ENCODE measurements at regions of chr2 and their contacts with region 1.

Region 1: DNA sequence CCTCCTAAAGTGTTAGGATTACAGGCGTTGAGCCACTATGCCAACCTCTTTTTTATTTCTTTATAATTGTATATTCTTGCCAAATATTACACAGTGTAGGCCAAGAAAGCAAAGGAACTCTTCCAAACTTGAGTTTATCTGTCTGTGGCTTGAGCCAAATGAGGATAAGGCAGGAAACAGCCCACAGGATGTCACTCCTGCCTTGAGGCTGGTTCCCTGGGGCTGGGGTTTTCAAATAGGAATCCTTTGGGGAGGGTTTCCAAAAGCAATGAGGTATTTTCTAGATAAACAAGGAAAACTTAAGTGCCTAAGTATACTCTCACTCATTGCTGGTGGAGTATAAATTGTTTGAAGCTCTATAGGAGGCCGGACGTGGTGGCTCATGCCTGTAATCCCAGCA is 56.4 kb downstream of the ADCY3 start:
- DNase-seq: no peak

Region 2: DNA sequence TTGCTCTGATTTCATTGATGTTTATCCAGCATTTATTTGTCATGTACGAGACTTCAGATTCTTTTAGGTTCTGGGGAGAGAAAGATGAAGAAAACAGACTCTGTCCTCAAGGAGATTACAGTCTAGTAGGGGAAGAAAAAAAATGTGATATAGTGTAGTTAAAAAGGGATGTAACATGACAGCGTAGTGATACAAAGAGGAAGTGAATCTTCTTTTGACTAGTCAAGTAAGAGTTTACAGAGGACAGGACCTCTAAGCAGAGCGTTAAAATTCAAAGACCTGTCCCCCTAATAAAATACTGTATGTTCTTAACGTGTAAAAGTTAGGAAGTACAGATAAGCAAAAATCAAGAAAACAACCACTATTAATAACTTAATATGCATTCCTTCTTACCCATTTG is 324.9 kb before region 1 on chr2:
- intact Hi-C with region 1: no loop called
- DNase-seq: no peak

Region 3: DNA sequence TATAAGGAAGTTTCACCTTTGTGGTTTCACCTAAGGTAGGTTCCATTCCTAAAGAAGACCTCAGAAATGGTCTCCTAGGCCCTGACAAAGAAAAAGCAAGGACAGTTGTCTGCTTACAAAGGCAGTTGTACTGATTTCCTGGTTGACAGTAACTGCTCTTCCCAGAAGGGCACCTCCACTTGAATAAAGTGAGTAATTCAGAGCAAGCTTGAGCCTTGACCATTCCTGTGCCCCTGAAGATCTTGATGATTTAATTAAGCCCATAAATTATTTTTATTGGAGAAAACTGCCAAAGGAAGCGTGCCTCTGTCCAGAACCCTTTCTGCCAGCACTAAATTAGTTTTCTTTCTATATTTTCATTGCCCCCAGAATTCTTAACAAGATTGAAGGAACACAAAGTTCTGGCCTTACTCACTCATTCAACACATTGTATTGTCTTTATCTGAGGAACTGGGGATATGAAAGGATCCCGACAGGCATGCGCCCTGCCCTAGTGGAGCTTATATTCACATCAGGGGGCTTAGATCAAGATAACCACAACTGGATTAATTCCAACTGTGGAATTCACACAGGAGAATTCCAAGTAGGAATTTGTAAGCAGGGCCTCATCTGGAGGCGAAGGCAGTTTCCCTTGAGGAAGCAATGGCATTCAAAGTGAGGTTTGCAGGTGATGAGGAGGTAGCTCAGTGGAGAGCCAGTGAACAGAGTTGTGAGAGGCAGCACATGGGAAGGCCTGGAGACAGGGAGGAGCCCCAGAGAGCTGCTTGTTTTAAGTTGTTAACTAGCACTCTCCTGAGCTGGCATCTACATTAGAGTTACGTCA is 91.7 kb before region 1 on chr2:
- intact Hi-C with region 1: no loop called
- DNase-seq: no peak

Region 4: DNA sequence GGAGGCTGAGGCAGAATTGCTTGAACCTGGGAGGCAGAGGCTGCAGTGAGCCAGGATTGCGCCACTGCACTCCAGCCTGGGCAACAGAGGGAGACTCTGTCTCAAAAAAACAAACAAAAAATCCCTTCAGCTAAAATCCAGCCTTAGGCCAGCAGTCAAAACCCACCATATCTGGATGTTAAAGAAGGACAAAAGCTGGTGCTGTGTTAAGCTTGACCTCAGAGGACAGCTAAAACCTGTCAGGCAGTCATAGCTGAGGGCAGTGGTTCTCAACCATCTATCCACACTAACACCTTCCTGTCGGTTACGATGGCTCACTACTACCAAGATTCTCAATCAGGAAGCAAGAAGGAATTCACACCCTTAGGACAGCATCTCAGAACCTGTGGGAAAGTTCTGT is 80.0 kb before region 1 on chr2:
- intact Hi-C with region 1: no loop called
- DNase-seq: no peak

Region 5: GRCh38 chr2:24915796-24916195 is 52.2 kb after region 1 on chr2:
- intact Hi-C with region 1: loop called in 1 of 2 experiments (anchors 1 kb)
- DNase-seq: peak; percentile 67

Region 6: GRCh38 chr2:25207078-25207545 is 343.5 kb after region 1 on chr2:
- intact Hi-C with region 1: loop called in 1 of 2 experiments (anchors 5 kb)
- DNase-seq: no peak